ENCODE measurements at regions of chr9 and their contacts with region 1.

Region 1: DNA sequence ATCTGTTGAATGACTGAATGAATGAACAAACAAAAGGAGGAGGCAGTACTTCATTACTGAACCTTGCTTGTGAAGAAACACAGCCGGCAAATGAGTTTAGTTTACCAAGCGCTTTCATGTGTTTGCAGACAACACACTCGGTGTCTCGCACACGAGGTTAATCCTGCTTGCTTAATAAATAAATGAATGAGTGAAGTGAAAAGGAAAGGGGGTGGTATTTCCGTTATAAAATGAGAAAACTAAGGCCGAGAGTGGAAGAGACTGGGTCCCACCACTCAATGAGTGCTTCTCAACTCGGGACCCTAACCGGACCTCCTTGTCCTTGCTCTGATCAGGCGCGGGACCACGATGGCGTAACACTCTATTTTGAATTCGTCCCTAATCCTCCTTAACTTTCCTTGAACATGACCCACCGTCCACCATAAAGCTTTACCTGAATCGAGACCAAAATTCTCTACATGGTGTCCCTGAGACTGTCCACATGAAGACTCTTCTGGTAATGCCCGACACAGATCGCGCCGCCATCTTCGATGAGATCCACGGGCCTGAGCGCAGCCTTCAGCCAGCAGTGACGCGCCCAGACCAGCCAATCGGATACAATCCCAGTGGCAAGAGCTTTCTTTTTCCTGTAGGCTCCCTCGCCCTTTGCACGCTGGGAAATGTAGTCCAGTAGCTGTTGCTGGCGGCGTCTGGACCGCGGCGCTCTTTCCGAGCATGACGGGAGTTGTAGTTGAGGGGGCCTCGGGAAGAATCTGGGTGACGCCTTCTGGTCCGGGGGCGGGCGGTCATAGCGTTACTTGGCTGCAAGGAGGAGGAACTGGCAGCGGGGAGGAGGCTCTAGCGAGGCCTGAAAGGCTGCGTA is at the starts of genes MRPL50 and ZNF189:
- DNase-seq: peak; percentile 99
- ATAC-seq: peak; percentile 97
- H3K4me3 Mint-ChIP-seq: peak within 1 kb of the TSS; percentile 98
- H3K27ac Mint-ChIP-seq: peak within 1 kb of the TSS; percentile 97
- H3K4me1 Mint-ChIP-seq: peaks cover 52% of the 10 kb centered on the region
- H3K27me3 Mint-ChIP-seq: no peaks in the 10 kb centered on the region
- total RNA-seq, gene MRPL50: 8.3 to 10.5 TPM
- total RNA-seq, gene ZNF189: 9.2 to 12.6 TPM

Region 2: GRCh38 chr9:101269591-101270283 is 128.6 kb before region 1 on chr9:
- CTCF ChIA-PET with region 1: no interaction called
- DNase-seq: no peak
- ATAC-seq: no peak
- H3K4me3 Mint-ChIP-seq: no peak overlapping the region
- H3K27ac Mint-ChIP-seq: no peak overlapping the region
- H3K4me1 Mint-ChIP-seq: no peaks in the 10 kb centered on the region
- H3K27me3 Mint-ChIP-seq: no peaks in the 10 kb centered on the region

Region 3: DNA sequence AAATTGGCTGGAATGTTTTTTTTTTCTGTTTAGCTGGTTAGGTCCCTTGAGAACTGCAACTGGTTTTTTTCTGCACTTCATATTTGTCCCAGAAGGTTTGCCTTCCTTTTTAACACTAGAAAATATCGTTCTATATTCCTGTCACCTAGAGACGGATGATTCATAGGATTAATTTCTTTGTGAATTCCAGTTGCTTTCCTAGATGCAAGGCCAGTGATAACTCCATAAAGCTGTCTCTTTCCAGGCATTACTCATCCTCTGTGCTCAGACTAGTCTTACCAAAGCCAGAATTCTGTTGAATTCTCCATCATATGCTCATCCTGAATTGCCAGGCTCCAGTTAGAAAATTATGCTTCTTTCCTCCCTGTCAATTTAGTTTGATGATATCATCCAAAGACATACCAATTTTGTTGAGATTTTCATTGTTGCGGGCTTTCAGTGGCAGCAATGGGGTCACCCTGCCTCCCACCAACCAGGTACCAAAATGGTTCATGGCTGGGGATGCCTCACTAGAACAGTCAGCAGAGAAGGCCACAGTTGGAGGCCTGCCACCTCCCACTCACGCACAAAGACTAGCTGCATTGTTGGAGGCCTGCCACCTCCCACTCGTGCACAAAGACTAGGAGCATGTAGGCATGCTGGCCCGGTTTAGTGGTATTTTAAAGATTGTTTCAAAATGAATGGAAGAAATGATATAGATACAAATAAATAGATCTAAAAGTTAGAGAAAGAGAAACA is 22.0 kb before region 1 on chr9:
- CTCF ChIA-PET with region 1: no interaction called
- DNase-seq: no peak
- ATAC-seq: no peak
- H3K4me3 Mint-ChIP-seq: no peak overlapping the region
- H3K27ac Mint-ChIP-seq: no peak overlapping the region
- H3K4me1 Mint-ChIP-seq: no peaks in the 10 kb centered on the region
- H3K27me3 Mint-ChIP-seq: peaks cover 6% of the 10 kb centered on the region

Region 4: GRCh38 chr9:101387871-101388506 is 10.3 kb before region 1 on chr9:
- CTCF ChIA-PET with region 1: interaction called, 14 read pairs
- DNase-seq: no peak
- ATAC-seq: no peak
- H3K4me3 Mint-ChIP-seq: no peak overlapping the region
- H3K27ac Mint-ChIP-seq: peak overlapping the region; percentile 40
- H3K4me1 Mint-ChIP-seq: peaks cover 12% of the 10 kb centered on the region
- H3K27me3 Mint-ChIP-seq: no peaks in the 10 kb centered on the region

Region 5: DNA sequence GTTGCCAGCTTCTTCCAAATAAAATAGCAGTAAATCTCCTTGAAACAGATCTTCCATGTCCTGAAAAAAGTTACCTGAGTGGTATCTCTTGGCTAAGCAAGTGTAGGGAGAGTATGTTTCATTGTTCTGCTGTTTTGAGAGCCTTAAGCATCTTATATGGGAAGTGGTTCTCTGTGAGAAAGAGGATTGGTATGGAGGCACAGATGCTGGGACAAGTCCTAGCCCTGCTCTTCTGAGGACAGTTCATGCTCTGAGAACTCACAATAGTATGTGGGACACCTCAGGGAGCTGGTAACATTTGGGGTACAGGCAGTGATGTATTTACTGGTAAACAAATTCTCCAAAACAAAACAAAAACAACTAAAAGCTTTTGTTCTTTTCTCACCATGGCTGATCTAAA is 194.5 kb after region 1 on chr9:
- CTCF ChIA-PET with region 1: no interaction called
- DNase-seq: no peak
- ATAC-seq: no peak
- H3K4me3 Mint-ChIP-seq: no peak overlapping the region
- H3K27ac Mint-ChIP-seq: no peak overlapping the region
- H3K4me1 Mint-ChIP-seq: no peaks in the 10 kb centered on the region
- H3K27me3 Mint-ChIP-seq: peaks cover 2% of the 10 kb centered on the region

Measured in activated CD8-positive, alpha-beta memory T cell treated with anti-CD3 and anti-CD28 coated beads, Interleukin-2, amount 10 ng/mL, durations not matched to agents 7 days and 5 days (primary cell).